Posterior cingulate gyrus (tissue), 11 donors: ENCODE measurements at regions of chr22 and their contacts with region 1.

Region 1: GRCh38 chr22:30754971-30755756 is 60.5 kb downstream of the OSBP2 start:
- DNase-seq: peak in 8 of 10 donors; percentile 52 to 94 (median 68)

Region 2: DNA sequence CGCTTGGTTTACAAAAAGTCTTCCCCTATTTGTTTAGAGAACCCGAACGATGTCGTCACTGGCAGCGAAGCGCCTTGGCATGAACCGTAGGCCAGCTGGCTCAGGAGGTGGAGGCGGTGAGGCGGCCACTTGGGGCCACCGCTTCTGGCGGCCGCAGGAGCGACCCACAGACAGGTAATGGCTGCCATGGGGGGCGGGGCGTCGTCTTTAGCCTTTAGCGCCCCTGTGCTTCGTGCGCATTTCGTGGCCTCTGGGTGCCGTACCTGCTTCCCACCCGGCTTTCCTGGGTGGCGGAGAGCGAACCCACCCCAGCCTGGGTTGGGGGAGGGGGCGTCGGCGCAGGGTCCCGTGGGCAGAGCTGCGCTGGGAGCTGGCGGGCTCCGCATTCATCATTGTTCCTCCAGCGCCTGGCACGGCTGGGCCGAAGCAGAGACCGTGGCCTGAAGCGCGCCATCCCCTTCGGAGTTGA is 61.0 kb before region 1 on chr22:
- intact Hi-C with region 1: loop called (anchors 2 kb)
- DNase-seq: peak; percentile 49 to 94 (median 62)